Activated naive CD4-positive, alpha-beta T cell treated with anti-CD3 and anti-CD28 coated beads, Interleukin-2, amount 10 ng/mL, durations not matched to agents 7 days and 5 days (primary cell): ENCODE measurements at regions of chr6 and their contacts with region 1.

Region 1: GRCh38 chr6:150079604-150080003 is 10.7 kb upstream of the ULBP3 start:
- DNase-seq: peak; percentile 64
- H3K4me3 Mint-ChIP-seq: no peak overlapping the region
- H3K27ac Mint-ChIP-seq: no peak overlapping the region
- H3K4me1 Mint-ChIP-seq: peaks cover 24% of the 10 kb centered on the region
- H3K27me3 Mint-ChIP-seq: peaks cover 40% of the 10 kb centered on the region

Region 2: DNA sequence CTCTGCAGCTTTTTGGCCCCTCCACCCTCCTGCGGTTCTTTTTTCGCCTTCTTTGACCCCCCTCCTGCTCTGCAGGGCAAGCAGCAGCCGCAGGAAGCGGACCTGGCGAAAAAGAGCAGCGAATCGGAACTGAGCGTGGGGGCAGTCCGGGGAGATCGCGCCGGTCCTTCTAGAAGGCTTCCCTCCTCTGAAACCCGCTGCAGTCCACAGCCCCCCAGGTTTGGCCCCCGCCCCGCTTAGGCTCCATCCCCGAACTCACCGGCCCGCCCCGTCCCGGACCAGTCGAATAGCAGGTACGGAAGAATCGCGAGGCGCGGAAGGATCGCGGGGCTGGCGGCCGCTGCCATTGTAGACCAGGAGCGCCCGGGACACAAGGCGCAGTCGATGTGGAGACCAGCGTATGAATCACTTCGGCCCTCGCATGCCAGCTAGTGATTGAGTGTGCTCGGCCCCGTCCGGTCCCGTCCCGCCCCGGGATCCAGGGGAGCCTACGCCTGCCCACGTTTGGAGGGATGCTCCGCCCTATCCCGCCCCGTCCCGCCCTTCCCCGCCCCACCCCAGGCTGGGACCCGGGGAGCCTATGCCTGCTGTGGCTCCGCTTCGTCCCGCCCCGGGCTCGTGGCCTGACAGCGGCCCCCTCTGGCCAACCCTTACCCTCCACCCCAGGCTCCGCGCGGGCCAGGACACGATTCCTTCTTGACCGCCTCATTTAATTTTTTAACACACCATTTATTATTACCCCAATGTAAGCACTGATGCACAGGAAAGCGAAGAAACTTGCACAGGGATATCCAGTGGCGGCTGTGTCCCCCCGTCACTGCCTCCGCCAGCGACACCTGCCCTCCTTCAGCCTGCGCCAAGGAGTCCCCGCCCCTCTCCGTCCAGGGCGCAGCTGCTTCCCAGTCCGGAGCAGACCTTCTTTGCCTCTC is 10.6 kb before region 1 on chr6 and contains the start of gene ULBP3:
- CTCF ChIA-PET with region 1: interaction called, 40 read pairs
- DNase-seq: peak; percentile 81
- H3K4me3 Mint-ChIP-seq: peak within 1 kb of the TSS; percentile 74
- H3K27ac Mint-ChIP-seq: no peak within 1 kb of the TSS
- H3K4me1 Mint-ChIP-seq: peaks cover 28% of the 10 kb centered on the region
- H3K27me3 Mint-ChIP-seq: peaks cover 51% of the 10 kb centered on the region

Region 3: DNA sequence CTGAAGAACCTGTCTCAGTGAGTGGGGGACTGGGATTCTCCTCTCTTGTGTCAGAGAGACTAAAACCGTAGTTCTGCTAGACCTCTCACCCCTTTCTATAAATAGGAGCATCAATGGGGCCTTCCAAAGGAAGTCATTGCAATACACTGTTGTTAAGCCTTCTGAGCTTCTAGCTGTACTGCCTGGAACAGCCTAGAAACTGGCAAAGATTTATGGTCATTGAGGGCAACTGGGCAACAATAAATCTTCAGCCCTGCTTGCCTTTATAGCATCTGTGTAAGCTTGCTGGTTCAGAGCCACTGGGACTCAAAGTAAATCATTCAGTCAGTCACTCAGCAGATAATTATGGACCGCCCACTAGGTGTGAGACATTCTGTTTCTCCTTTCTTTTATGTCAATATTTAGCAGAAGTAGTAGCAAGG is 116.4 kb after region 1 on chr6:
- CTCF ChIA-PET with region 1: no interaction called
- DNase-seq: no peak
- H3K4me3 Mint-ChIP-seq: no peak overlapping the region
- H3K27ac Mint-ChIP-seq: no peak overlapping the region
- H3K4me1 Mint-ChIP-seq: no peaks in the 10 kb centered on the region
- H3K27me3 Mint-ChIP-seq: peaks cover 16% of the 10 kb centered on the region

Region 4: GRCh38 chr6:150334790-150335783 is 255.5 kb after region 1 on chr6:
- CTCF ChIA-PET with region 1: interaction called, 10 read pairs
- DNase-seq: peak; percentile 47
- H3K4me3 Mint-ChIP-seq: no peak overlapping the region
- H3K27ac Mint-ChIP-seq: no peak overlapping the region
- H3K4me1 Mint-ChIP-seq: no peaks in the 10 kb centered on the region
- H3K27me3 Mint-ChIP-seq: peaks cover under 1% of the 10 kb centered on the region